Caco-2 (cell line): ENCODE measurements at regions of chr2 and their contacts with region 1.

Region 1: GRCh38 chr2:158753641-158754611 is 41.2 kb upstream of the DAPL1 start:
- DNase-seq: peak in 1 of 2 experiments; percentile 64
- H3K4me3 ChIP-seq: no peak overlapping the region
- H3K4me3 Mint-ChIP-seq: no peak overlapping the region
- H3K27ac Mint-ChIP-seq: no peak overlapping the region
- H3K4me1 ChIP-seq: peaks cover 25% of the 10 kb centered on the region
- H3K4me1 Mint-ChIP-seq: peaks cover 22% of the 10 kb centered on the region
- H3K27me3 ChIP-seq: no peaks in the 10 kb centered on the region
- H3K27me3 Mint-ChIP-seq: no peaks in the 10 kb centered on the region
- CTCF ChIP-seq: peak; percentile 82

Region 2: DNA sequence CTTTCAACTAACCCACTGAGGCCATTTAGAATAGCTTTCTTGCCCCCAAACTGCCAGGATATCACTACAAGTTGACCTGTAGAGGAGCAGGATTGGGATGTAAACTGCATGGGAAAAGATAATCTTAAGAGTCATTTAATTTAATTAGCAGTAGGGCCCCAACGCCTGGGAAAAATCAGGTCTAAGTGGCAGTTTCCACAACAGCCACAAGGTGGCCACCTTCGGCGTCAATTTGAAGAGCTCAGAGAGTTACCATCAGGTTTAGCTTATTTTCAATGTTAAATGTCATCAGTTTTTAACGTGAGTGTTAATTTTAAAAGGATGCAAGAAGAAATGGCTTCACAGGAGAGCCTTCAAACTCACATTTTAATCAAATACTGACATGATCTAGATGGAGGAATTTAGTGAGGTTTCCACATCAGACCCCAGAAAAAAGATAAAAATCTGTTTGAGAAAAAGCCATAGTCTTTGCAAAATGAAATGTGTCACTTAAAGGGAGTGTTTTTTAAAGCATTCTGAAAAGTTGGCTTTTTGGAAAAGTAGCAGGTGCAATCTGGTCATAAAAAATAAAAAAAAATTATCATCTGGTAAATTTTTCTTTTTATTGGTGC is 729.5 kb before region 1 on chr2:
- CTCF ChIA-PET with region 1: interaction called, 10 read pairs
- POLR2A ChIA-PET with region 1: no interaction called
- intact Hi-C with region 1: no loop called
- DNase-seq: peak in 1 of 2 experiments; percentile 61
- H3K4me3 ChIP-seq: no peak overlapping the region
- H3K4me3 Mint-ChIP-seq: no peak overlapping the region
- H3K27ac Mint-ChIP-seq: no peak overlapping the region
- H3K4me1 ChIP-seq: no peaks in the 10 kb centered on the region; the same call in 1 of the 2 replicates
- H3K4me1 Mint-ChIP-seq: no peaks in the 10 kb centered on the region
- H3K27me3 ChIP-seq: no peaks in the 10 kb centered on the region
- H3K27me3 Mint-ChIP-seq: no peaks in the 10 kb centered on the region
- CTCF ChIP-seq: peak; percentile 81 to 88

Region 3: DNA sequence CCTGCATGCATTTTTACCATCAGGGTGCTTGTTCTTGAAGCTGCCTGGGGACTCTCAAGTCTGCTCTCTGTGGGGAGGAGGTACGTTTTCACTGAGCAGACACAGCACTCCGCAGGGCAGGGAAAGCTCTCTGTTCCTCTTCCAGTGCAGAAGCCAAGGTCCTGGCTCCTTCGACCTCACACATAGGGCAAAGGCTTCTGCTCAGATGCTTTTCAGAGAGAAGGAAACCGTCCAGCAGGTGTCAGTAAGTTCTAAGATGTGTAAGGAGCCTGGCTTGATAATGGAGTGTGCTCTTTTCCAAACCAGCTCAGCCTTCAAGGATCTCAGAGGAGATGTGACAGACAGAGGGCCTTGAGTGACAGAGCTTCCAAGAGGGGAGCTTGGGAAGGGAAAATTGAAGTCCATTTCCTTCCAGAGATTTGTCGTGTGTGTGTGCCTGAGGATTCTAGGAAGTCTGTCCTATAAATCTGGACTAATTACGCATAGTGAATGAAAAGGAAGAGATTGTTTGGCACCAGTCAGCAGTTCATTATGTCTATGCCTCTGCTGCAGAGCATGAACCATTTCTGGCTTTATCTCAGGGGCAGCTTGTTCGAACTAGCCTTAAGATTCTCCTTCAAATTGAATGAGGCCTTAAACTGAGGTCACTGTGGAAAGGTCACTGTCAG is 719.6 kb before region 1 on chr2:
- CTCF ChIA-PET with region 1: interaction called, 8 read pairs
- POLR2A ChIA-PET with region 1: no interaction called
- intact Hi-C with region 1: loop called (anchors 2 kb)
- DNase-seq: peak; percentile 69 to 75
- H3K4me3 ChIP-seq: no peak overlapping the region
- H3K4me3 Mint-ChIP-seq: no peak overlapping the region
- H3K27ac Mint-ChIP-seq: no peak overlapping the region
- H3K4me1 ChIP-seq: no peaks in the 10 kb centered on the region
- H3K4me1 Mint-ChIP-seq: peaks cover 9% of the 10 kb centered on the region
- H3K27me3 ChIP-seq: no peaks in the 10 kb centered on the region
- H3K27me3 Mint-ChIP-seq: peaks cover 7% of the 10 kb centered on the region
- CTCF ChIP-seq: peak; percentile 71 to 74

Region 4: DNA sequence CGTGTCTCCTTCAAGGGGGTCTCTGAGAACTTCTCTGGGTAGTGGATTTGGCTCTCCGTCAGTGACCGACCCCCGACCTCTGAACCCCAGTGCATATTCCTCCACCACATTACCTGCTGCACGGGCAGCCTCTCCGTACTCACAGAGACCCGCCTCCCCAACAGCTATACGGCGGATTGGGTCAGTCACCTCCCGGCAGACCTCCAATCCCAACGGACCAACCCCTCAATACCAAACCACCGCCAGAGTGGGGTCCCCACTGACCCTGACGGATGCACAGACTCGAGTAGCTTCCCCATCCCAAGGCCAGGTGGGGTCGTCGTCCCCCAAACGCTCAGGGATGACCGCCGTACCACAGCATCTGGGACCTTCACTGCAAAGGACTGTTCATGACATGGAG is 129.0 kb before region 1 on chr2:
- CTCF ChIA-PET with region 1: no interaction called
- POLR2A ChIA-PET with region 1: no interaction called
- intact Hi-C with region 1: no loop called
- DNase-seq: no peak
- H3K4me3 ChIP-seq: no peak overlapping the region
- H3K4me3 Mint-ChIP-seq: no peak overlapping the region
- H3K27ac Mint-ChIP-seq: no peak overlapping the region
- H3K4me1 ChIP-seq: no peaks in the 10 kb centered on the region
- H3K4me1 Mint-ChIP-seq: no peaks in the 10 kb centered on the region
- H3K27me3 ChIP-seq: no peaks in the 10 kb centered on the region
- H3K27me3 Mint-ChIP-seq: no peaks in the 10 kb centered on the region
- CTCF ChIP-seq: no peak

Region 5: DNA sequence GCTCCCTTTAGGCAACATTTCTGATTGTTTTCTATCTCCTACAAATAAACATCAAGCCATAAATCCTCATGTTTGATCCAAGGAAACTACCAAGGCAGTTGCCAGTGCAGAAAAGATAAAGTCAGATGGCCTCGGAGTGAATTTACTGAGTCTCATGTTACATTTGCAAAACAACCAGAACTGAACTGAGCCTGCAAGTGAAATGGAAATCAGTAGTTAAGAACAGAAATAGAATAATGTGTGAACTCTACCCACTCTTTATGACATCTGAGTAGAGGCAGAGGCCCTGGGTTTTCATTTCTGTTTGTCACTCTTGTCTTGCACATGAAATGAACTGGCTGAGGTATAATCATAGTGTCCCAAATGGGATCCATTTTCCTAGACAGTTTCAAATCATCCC is 20.8 kb after region 1 on chr2:
- CTCF ChIA-PET with region 1: interaction called, 5 read pairs
- POLR2A ChIA-PET with region 1: no interaction called
- intact Hi-C with region 1: loop called (anchors 1 kb)
- DNase-seq: no peak
- H3K4me3 ChIP-seq: no peak overlapping the region
- H3K4me3 Mint-ChIP-seq: no peak overlapping the region
- H3K27ac Mint-ChIP-seq: no peak overlapping the region
- H3K4me1 ChIP-seq: peaks cover 36% of the 10 kb centered on the region
- H3K4me1 Mint-ChIP-seq: peaks cover 15% of the 10 kb centered on the region
- H3K27me3 ChIP-seq: no peaks in the 10 kb centered on the region
- H3K27me3 Mint-ChIP-seq: no peaks in the 10 kb centered on the region
- CTCF ChIP-seq: no peak

Region 6: DNA sequence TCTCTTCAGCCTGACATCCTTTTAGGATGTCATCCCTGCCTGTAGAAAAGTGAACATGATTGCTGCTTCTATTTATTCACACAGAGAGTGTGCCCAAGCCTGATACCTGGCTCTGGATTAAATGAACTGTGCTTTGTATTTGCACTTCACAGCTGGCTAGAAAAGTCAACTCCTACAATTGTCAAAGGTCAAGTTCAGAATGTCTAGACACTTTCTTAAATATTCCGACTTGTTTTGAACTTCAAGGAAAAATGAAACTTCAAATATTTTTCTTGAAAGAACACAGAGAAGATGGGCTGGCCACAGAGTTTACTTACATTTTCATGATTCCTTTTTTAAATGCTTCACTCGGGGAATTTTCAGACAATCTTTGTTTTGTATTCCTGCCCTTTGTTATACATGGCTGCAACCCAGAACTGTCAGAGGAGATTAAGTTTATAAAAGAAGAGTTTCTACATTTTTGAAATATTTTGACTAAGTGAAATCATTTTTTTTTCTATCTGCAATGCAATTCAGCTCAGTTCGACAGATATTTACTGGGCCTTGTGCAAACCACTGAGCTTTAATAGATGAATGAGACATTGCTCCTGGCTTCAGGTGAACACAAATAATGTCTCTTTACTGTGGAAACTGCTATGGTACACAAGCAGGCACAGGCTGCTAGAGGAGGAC is 74.7 kb after region 1 on chr2:
- CTCF ChIA-PET with region 1: interaction called, 5 read pairs
- POLR2A ChIA-PET with region 1: no interaction called
- intact Hi-C with region 1: loop called (anchors 5 kb)
- DNase-seq: no peak
- H3K4me3 ChIP-seq: no peak overlapping the region
- H3K4me3 Mint-ChIP-seq: peak overlapping the region; percentile 20
- H3K27ac Mint-ChIP-seq: peak overlapping the region; percentile 30
- H3K4me1 ChIP-seq: peaks cover 21% of the 10 kb centered on the region
- H3K4me1 Mint-ChIP-seq: peaks cover 22% of the 10 kb centered on the region
- H3K27me3 ChIP-seq: no peaks in the 10 kb centered on the region
- H3K27me3 Mint-ChIP-seq: no peaks in the 10 kb centered on the region
- CTCF ChIP-seq: no peak

Region 7: GRCh38 chr2:158845859-158846258 is 91.9 kb after region 1 on chr2:
- CTCF ChIA-PET with region 1: no interaction called
- POLR2A ChIA-PET with region 1: no interaction called
- intact Hi-C with region 1: loop called (anchors 2 kb)
- DNase-seq: no peak
- H3K4me3 ChIP-seq: no peak overlapping the region
- H3K4me3 Mint-ChIP-seq: no peak overlapping the region
- H3K27ac Mint-ChIP-seq: no peak overlapping the region
- H3K4me1 ChIP-seq: peaks cover 14% of the 10 kb centered on the region
- H3K4me1 Mint-ChIP-seq: peaks cover 27% of the 10 kb centered on the region
- H3K27me3 ChIP-seq: no peaks in the 10 kb centered on the region
- H3K27me3 Mint-ChIP-seq: no peaks in the 10 kb centered on the region
- CTCF ChIP-seq: no peak